Heart right ventricle (tissue), 16 donors: ENCODE measurements at regions of chr20 and their contacts with region 1.

Region 1: DNA sequence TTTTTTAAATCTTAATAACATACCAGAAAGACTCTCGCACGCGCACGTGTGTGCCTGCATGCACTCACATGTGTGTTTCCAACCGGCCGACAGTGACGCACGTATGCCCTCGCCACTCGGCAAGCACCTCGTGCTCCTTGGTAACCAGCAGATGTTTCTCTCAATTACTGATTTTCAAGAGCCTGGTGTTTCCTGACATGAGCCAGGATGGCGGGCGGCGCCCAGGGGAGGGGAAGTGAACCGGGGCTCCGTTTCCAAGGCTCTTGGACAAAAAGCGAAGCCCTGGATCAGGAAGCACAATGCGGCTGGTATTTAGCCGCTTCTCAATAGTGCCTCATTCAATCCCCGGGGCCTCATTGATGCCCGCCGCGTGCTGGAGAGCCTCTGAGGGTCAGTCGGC is 37.7 kb downstream of the PMEPA1 start:
- DNase-seq: peak; percentile 51 to 70
- ATAC-seq: peak in 7 of 8 donors; percentile 66 to 84 (median 77)
- H3K4me3 ChIP-seq: peak overlapping the region in 2 of 10 donors; percentile 19 to 22
- H3K27ac ChIP-seq: peak overlapping the region in 1 of 10 donors; percentile 2
- H3K4me1 ChIP-seq: peaks cover 12 to 69% (median 28%) of the 10 kb centered on the region in 9 donors
- H3K27me3 ChIP-seq: no peaks in the 10 kb centered on the region
- CTCF ChIP-seq: no peak

Region 2: GRCh38 chr20:57709931-57710799 is 38.0 kb after region 1 on chr20 and contains the start of gene PMEPA1:
- intact Hi-C with region 1: loop called in 1 of 10 experiments (anchors 5 kb)
- DNase-seq: peak; percentile 94 to 95
- ATAC-seq: peak; percentile 91 to 95 (median 93)
- H3K4me3 ChIP-seq: peak within 1 kb of the TSS; percentile 51 to 92 (median 80)
- H3K27ac ChIP-seq: peak within 1 kb of the TSS; percentile 69 to 96 (median 91)
- H3K4me1 ChIP-seq: peaks cover 12 to 70% (median 55%) of the 10 kb centered on the region in 9 donors
- H3K27me3 ChIP-seq: peaks cover 0 to 33% (median 0%) of the 10 kb centered on the region in 7 donors
- CTCF ChIP-seq: peak in 4 of 9 donors; percentile 16 to 35 (median 18)
- total RNA-seq, gene PMEPA1: 16.1 to 39.2 (median 30.4) TPM